ENCODE measurements at regions of chr11 and their contacts with region 1.

Region 1: DNA sequence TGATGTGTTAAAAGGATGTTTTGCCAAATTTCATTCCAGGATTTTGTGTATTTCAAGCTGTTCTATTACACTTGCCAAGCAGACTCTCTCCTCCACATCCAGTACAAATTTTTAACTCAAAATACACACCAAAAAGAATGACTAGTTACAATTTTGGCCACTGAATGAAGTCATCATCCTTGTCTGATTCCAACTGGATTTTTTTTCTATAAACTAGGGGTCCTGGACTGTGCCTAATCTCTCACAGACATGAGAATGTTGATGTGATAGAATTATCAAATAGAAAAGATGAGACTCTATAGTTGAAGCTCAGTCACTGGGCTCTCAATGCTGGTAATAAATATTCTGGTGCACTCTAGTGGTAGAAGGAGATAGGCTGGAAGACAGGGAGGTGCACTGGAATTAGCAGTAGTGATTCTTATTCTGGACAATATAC is 85.8 kb downstream of the FANCF start:
- DNase-seq: no peak
- ATAC-seq: no peak
- H3K4me3 Mint-ChIP-seq: no peak overlapping the region
- H3K27ac Mint-ChIP-seq: no peak overlapping the region
- H3K4me1 Mint-ChIP-seq: no peaks in the 10 kb centered on the region
- H3K27me3 Mint-ChIP-seq: peaks cover 12% of the 10 kb centered on the region

Region 2: DNA sequence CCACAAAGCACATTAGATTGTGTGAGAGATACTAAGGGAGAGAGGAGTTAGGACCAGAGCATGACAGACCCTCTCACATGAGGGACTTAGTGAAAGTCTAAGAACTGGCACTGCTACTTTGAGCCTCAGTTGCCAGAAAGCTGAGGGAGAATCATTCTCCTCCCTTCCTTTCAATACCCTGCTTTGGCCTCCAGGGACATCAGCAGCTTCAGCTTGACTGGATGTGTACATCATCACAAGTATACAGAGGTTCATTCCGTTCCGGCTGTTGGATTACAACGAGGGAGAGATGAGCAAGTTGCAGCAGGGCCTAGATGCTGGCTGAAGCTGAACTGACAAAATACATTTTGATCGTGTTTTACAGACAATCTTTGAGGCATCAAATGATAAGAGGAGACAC is 362.7 kb before region 1 on chr11:
- CTCF ChIA-PET with region 1: no interaction called
- POLR2A ChIA-PET with region 1: no interaction called
- intact Hi-C with region 1: no loop called
- DNase-seq: no peak
- ATAC-seq: no peak
- H3K4me3 Mint-ChIP-seq: no peak overlapping the region
- H3K27ac Mint-ChIP-seq: no peak overlapping the region
- H3K4me1 Mint-ChIP-seq: no peaks in the 10 kb centered on the region
- H3K27me3 Mint-ChIP-seq: peaks cover 1% of the 10 kb centered on the region

Region 3: DNA sequence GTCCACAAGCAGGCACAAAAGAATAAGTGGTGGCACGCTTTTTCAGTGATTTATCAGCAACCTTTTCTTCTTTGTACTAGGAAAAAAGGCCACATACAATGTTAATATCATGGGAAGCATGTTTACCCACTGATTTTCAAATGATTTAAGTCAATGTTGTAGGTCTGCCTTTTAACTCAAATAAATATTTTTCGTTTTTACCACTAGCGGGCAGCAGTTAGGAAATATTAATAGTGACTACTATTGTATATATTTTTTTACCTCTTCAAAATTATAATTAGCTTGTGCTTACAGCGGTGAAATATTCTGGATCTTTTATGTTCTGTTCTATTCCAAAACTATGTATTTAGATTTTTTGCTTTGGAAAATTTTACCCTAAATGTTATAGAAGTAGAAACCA is 208.1 kb before region 1 on chr11:
- CTCF ChIA-PET with region 1: interaction called, 4 read pairs
- POLR2A ChIA-PET with region 1: no interaction called
- intact Hi-C with region 1: loop called in 1 of 2 experiments (anchors 2 kb)
- DNase-seq: no peak
- ATAC-seq: no peak
- H3K4me3 Mint-ChIP-seq: no peak overlapping the region
- H3K27ac Mint-ChIP-seq: no peak overlapping the region
- H3K4me1 Mint-ChIP-seq: no peaks in the 10 kb centered on the region
- H3K27me3 Mint-ChIP-seq: peaks cover 12% of the 10 kb centered on the region